Breast epithelium (tissue), 4 donors: ENCODE measurements at regions of chr11 and their contacts with region 1.

Region 1: DNA sequence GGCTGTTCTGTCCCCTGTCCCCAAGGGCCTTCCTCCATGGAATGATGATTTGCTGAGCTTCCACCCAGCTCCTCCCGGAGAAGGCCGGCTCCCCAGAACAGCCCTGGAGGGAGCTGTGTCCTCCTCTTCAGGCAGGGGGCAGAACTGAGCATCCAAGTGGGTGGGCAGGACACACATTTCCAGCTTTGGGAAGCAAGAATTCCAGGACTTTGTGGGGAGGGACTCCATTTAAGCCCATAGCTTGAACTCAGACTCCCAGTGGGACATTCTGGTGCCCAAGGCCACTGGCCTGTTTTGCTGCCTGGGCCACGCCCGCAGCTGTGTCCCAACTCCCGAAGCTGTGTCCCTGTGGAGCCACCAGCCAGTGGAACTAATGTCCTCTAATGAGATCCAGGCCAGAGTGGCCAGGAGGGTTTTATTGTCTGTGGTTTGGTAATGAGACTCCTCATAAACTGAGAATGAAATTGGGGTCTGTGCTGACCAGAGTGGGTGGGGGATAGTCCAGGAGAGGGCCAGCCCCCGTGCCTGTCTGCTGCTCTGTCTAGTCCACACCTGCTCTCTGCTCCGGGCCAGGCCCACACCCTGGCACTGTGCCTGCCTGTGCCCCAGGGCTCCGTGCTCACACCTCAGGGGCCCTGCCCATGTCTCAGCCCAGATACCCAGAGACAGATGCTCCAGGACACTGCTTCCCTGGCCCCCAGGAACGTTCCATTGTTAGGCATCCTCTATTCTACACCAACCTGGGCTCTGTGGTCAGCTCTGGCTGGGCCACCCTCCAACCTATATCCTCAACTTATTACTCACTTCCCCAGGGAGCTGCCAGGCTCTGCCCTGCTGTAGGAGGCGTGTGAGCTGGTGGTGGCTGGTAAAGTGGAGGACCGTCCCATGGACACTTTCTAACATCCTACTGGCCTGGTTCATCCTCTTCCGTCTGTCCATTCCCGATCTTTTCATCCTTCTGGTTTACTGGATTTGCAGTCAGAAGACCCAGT is 7.6 kb downstream of the NECTIN1 start:
- DNase-seq: peak in 1 of 2 donors; percentile 54
- H3K4me3 ChIP-seq: peak overlapping the region in 2 of 3 donors; percentile 15 to 20
- H3K27ac ChIP-seq: peak overlapping the region; percentile 69 to 80
- H3K4me1 ChIP-seq: peaks cover 0 to 8% of the 10 kb centered on the region in 2 donors
- H3K27me3 ChIP-seq: no peaks in the 10 kb centered on the region
- CTCF ChIP-seq: peak in 2 of 3 donors; percentile 25 to 40
- POLR2A ChIP-seq: no peak

Region 2: GRCh38 chr11:119673759-119674336 is 47.6 kb before region 1 on chr11:
- intact Hi-C with region 1: loop called (anchors 5 kb)
- DNase-seq: no peak
- H3K4me3 ChIP-seq: no peak overlapping the region
- H3K27ac ChIP-seq: peak overlapping the region; percentile 7 to 62
- H3K4me1 ChIP-seq: no peaks in the 10 kb centered on the region
- H3K27me3 ChIP-seq: no peaks in the 10 kb centered on the region
- CTCF ChIP-seq: no peak
- POLR2A ChIP-seq: no peak